ENCODE measurements at regions of chr1 and their contacts with region 1.

Region 1: DNA sequence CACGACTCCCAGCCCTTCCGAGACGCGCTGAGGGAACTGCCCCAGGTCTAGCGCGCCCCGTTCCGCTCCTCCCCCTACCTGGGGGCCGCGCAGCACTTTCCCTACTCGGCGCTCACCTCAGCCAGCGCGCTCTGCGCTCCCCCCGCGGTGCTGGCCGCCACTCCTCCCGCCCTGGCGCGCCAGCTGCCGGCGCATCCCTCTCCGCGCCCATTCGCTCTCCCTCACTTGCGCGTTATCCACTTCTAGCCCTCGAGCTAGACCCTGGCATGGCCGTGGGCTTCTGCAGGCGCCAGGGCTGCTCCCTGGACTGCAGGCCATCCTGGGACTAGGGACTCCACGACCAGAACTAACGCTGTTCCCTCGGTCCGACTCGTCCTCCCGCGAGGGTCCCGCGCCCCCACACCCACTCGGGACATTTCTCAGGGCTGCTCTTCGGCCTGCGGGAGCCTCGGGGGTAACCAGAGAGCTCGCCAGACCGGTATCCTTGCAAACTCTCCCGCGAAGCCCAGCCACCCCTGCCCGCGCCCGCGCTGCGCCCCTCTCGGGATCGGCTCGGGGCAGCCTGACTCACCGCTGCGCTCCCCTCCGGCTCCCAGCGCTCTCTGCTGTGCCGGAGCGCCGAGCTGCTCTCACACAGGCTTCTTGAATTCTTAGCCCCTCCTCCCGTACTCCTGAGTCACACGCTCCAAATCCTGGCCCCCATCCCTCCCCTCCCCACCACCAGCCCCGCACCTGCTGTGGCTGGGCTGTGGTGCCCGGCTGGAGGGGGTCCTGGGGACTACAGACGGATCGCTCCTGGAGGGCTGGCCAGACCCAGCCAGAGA is at the start of gene NGF:
- DNase-seq: peak; percentile 81 to 92
- ATAC-seq: peak; percentile 90
- H3K4me3 ChIP-seq: peak within 1 kb of the TSS; percentile 43 to 54
- H3K27ac ChIP-seq: peak within 1 kb of the TSS in 1 of 2 donors; percentile 65
- H3K4me1 ChIP-seq: peaks cover 0 to 14% of the 10 kb centered on the region in 2 donors
- H3K27me3 ChIP-seq: no peaks in the 10 kb centered on the region
- total RNA-seq, gene NGF: 10.2 to 17.2 TPM

Region 2: DNA sequence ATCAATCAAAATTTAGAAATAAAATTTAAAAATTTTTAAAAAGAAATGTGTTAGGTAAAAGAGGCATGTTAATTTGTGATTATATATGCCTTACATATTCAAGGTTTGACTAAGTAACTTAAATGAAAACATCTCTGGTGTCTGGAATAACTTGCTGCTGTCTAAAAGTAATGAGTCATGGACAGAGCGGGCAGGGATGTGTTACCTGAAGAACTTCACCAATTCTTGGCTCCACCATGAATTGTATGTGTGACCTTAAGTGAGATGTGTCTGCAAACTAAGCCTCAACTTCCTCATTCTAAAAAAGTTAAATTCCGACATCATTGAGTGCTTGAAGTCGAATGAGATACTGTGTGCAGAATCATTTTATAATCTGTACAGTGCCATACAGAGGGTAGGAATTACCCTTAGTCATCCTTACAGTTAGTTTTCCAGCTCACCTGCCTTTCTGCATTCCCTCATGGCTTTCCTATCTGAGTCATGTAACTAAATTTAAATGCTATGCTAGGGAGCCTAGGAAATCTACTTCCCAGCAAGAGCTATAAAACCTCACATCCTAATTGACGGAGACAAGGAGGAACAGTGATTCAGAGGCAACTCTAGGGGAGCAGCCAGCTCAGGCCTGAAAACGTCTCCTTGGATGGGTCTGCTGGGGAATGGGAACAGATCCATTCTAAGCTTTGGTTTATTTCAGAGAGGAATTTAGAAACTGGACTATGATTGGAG is 147.9 kb before region 1 on chr1:
- intact Hi-C with region 1: loop called (anchors 5 kb)
- DNase-seq: no peak
- ATAC-seq: peak; percentile 78
- H3K4me3 ChIP-seq: no peak overlapping the region
- H3K27ac ChIP-seq: peak overlapping the region; percentile 61 to 77
- H3K4me1 ChIP-seq: peaks cover 0 to 6% of the 10 kb centered on the region in 2 donors
- H3K27me3 ChIP-seq: no peaks in the 10 kb centered on the region

Region 3: DNA sequence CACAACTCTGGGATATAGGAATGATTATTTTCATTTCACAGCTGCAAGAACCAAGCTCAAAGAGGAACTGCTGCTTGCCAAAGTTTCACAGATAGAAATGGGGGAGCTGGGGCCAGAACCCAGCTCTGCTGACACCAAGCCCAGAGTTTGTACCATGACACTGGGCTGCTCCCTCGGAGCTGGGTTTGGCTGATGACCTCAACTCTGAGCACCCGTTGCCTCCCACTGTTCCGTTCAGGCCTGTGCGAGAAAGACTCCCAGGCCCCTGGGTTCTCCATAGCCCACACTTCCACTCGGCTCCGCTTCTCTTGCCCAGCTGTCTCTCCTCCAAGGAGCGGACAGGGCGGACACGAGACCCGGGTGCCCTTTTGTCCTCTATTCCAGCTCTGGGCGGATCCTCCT is 55.0 kb before region 1 on chr1:
- intact Hi-C with region 1: loop called in 1 of 2 experiments (anchors 5 kb)
- DNase-seq: peak; percentile 86 to 88
- ATAC-seq: peak; percentile 89
- H3K4me3 ChIP-seq: no peak overlapping the region
- H3K27ac ChIP-seq: peak overlapping the region; percentile 50 to 91
- H3K4me1 ChIP-seq: peaks cover 0 to 5% of the 10 kb centered on the region in 2 donors
- H3K27me3 ChIP-seq: no peaks in the 10 kb centered on the region

Measured in aorta (tissue), 5 donors.